Left cardiac atrium (tissue), 4 donors: ENCODE measurements at regions of chr4 and their contacts with region 1.

Region 1: GRCh38 chr4:138182838-138183426 is 59.2 kb downstream of the SLC7A11 start:
- DNase-seq: no peak
- ATAC-seq: peak; percentile 49 to 53

Region 2: DNA sequence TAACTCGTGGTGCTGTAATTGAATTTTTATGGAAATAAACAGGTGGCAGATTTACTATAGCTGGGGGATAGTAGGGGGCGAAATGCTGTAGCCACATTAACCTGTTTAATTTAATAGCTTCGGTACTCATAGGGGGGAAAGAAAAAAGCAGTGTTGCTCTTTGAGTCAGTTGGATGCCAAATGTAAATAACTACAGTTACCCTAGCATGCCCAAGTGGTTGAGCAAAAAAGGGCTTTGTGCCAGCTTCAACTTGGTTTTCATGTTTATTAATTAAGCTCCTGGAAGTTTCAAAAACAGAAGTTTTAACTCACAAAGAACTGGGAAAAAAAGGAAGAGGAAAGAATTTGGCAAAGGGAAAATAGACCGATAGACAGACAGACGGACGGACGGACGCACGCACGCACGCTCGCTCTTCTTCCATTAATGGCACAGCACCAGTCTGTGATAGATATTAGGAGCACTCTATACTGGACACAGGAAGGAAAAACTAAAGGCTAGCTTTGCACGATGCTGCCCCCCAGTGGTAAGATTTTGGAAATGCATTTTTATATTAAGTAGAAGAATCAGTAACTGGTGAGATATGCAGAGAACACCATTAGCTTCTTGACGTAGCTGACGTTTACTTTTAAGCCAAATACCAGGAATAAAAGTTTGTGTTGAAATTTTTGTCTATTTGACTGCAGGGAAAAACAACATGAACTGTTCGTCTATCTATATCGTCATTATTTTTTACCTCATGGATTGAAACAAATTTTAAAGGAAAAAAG is 92.6 kb before region 1 on chr4:
- intact Hi-C with region 1: loop called in 1 of 2 experiments (anchors 5 kb)
- DNase-seq: no peak
- ATAC-seq: peak; percentile 67 to 87

Region 3: DNA sequence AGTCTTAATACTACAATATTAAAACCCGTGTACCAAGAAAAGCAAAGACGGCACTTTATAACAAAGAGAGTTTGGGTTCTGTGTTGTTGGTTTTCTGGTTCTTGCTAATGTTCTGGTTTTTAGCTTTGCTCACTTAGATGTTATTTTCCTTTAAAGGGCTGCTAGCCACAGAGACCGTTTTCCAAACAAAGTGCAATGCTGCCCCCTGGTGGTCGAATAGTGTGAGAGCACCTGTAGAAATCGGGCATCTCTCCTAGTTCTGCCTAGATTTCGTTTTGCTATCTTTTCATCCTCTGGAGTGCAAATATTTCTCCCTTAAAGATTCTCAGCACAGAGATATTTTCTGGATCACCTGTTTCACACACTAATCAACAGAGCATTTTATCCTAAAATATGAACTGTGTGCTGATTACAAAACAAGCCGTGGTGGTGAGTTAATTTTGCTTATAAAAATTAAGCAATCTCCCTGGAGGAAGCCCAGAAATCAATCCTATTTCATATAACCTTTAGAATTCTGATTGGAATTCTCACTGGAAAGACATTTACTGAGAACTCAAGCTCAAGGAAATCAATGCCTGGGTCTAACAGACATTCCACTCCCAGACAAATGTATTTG is 498.2 kb after region 1 on chr4:
- intact Hi-C with region 1: loop called in 1 of 2 experiments (anchors 5 kb)
- DNase-seq: peak; percentile 84
- ATAC-seq: peak; percentile 68 to 72

Region 4: DNA sequence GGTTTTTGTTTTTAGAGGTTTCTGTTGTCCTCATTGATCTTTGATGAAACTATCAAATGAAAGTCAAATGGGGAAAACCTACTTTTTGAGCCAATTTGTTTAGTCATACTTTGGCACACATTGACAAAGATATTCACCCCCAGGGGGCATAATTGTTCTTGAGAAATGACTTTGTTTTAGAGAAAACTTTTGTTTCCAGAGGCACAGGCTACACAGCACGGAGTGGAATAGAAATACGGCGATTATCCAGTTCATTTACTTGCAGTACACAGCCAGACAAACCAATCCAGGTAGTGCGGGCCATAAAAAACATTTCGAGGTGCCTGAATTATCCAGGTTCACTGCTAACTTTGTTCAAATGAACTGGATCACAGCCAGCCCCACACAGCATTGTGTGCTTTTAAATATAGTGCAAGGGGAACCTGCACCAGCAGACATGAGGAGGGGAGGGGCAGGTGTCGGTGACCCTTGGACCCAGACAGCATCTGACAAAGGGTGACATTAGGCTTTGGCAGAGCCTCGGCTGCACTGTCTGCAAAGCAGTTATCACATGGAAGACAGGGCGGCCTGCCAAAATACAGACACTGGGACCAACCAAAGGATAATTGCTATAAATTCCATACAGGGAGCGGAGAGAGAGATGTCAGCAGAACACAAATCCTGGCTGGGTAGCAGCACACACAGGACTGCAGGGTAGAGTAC is 653.1 kb after region 1 on chr4:
- intact Hi-C with region 1: no loop called
- DNase-seq: peak; percentile 59
- ATAC-seq: peak; percentile 75 to 79

Region 5: GRCh38 chr4:138870737-138871554 is 688.0 kb after region 1 on chr4:
- intact Hi-C with region 1: loop called in 1 of 2 experiments (anchors 5 kb)
- DNase-seq: peak; percentile 26
- ATAC-seq: peak; percentile 66 to 73

Region 6: DNA sequence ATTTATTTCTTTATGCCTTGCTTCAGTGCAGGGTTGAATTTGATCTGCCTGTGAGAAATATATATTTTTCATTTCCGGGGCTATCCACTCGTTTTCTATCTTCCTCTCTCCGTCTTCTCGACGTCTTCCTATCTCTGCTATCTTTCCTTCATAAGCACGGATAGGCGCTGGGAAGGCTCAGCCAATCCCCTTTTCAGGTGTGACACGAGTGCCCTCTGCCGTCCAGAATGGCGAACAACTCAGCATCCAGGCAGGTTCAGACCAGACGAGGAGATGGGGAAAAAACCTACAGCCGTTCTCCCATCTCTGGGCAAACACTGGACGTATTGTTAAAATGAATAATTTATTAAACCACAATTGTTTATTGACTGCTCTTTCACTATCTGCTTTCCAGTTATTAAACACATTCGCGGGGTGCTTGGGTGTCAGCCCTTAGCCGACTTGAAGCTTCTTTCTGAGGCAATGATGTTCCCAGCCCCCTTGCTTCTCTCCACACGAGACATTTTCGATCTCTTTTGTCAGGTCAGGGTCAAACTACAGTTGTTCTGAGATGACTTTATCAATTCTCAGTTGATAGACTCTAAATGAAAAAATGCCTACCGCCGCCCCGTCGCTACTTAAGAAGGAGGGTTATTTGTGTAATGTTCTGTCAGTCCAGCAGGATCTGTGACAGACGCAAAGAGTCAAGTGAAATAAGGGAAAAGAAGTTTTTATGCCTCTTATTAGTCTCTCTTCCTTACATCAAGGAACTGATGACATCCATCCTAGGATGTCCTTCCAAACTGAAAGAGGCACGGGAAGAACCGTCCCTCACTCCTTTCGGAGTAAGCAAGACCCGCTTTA is 736.4 kb after region 1 on chr4:
- intact Hi-C with region 1: loop called in 1 of 2 experiments (anchors 10 kb)
- DNase-seq: peak; percentile 76
- ATAC-seq: peak; percentile 77 to 97